B cell (primary cell): ENCODE measurements at regions of chr2 and their contacts with region 1.

Region 1: GRCh38 chr2:164917296-164917903 is 37.9 kb downstream of the SLC38A11 start:
- DNase-seq: no peak
- ATAC-seq: no peak
- H3K4me3 ChIP-seq: no peak overlapping the region
- H3K4me3 Mint-ChIP-seq: no peak overlapping the region
- H3K27ac ChIP-seq: no peak overlapping the region
- H3K27ac Mint-ChIP-seq: no peak overlapping the region
- H3K4me1 ChIP-seq: peaks cover 14% of the 10 kb centered on the region in 2 donors
- H3K4me1 Mint-ChIP-seq: peaks cover 21% of the 10 kb centered on the region
- H3K27me3 ChIP-seq: no peaks in the 10 kb centered on the region
- H3K27me3 Mint-ChIP-seq: no peaks in the 10 kb centered on the region
- CTCF ChIP-seq: no peak

Region 2: DNA sequence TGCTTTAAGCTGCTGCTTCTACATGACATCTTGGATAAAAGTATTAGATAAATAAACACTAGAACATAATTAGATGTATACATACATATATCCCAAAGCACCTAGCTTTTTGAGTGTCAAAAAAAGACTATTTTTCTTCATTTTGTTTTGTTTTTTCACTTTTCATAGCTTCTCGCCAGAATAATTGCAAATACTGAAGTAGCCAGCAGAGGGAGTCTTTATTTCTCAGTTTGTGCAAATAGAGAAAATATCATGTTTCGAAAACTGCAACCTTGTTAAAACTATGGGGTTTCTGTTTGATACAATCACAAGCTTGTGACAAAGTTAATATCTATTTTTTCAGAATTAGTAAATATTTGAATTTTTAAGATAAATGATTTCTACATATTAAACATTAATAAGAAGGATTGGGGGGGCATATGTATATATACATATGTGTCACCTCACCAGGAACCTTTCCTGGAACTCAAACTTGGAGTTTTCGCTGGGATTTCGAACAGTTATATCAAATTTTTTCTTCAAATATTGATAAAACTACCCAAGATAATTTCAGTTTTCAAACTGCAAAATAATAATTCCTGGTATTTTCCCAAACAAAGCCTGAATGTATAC is 357.1 kb before region 1 on chr2:
- CTCF ChIA-PET with region 1: interaction called, 8 read pairs
- POLR2A ChIA-PET with region 1: no interaction called
- intact Hi-C with region 1: loop called (anchors 10 kb)
- DNase-seq: peak; percentile 15
- ATAC-seq: no peak
- H3K4me3 ChIP-seq: no peak overlapping the region
- H3K4me3 Mint-ChIP-seq: no peak overlapping the region
- H3K27ac ChIP-seq: no peak overlapping the region
- H3K27ac Mint-ChIP-seq: no peak overlapping the region
- H3K4me1 ChIP-seq: no peaks in the 10 kb centered on the region
- H3K4me1 Mint-ChIP-seq: peaks cover 4% of the 10 kb centered on the region
- H3K27me3 ChIP-seq: no peaks in the 10 kb centered on the region
- H3K27me3 Mint-ChIP-seq: peaks cover 3% of the 10 kb centered on the region
- CTCF ChIP-seq: peak; percentile 90

Region 3: GRCh38 chr2:165120740-165121467 is 203.5 kb after region 1 on chr2:
- CTCF ChIA-PET with region 1: no interaction called
- POLR2A ChIA-PET with region 1: no interaction called
- intact Hi-C with region 1: no loop called
- DNase-seq: no peak
- ATAC-seq: no peak
- H3K4me3 ChIP-seq: no peak overlapping the region
- H3K4me3 Mint-ChIP-seq: no peak overlapping the region
- H3K27ac ChIP-seq: no peak overlapping the region
- H3K27ac Mint-ChIP-seq: no peak overlapping the region
- H3K4me1 ChIP-seq: no peaks in the 10 kb centered on the region
- H3K4me1 Mint-ChIP-seq: no peaks in the 10 kb centered on the region
- H3K27me3 ChIP-seq: no peaks in the 10 kb centered on the region
- H3K27me3 Mint-ChIP-seq: no peaks in the 10 kb centered on the region
- CTCF ChIP-seq: no peak

Region 4: DNA sequence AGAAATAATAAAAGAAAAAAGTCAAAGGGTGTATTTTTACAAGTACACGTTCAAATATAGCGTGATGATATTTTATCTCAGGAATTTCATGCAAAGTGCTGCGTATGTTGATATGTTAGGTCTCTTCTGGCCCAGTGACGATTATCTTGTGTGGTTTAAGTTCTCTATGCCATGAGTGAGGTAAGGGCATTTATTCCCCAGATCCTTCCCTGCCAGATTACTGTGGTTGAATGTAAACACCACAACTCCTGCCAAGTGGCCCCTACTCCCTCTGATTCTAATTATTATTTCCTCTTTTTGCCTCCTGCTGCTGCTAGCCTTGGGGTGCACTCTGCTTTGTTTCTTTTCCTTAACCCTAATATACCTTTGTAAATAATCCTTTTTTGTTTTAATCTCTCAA is 334.0 kb after region 1 on chr2:
- CTCF ChIA-PET with region 1: no interaction called
- POLR2A ChIA-PET with region 1: no interaction called
- intact Hi-C with region 1: no loop called
- DNase-seq: no peak
- ATAC-seq: no peak
- H3K4me3 ChIP-seq: no peak overlapping the region
- H3K4me3 Mint-ChIP-seq: no peak overlapping the region
- H3K27ac ChIP-seq: no peak overlapping the region
- H3K27ac Mint-ChIP-seq: no peak overlapping the region
- H3K4me1 ChIP-seq: no peaks in the 10 kb centered on the region
- H3K4me1 Mint-ChIP-seq: no peaks in the 10 kb centered on the region
- H3K27me3 ChIP-seq: no peaks in the 10 kb centered on the region
- H3K27me3 Mint-ChIP-seq: peaks cover 7% of the 10 kb centered on the region
- CTCF ChIP-seq: no peak